ENCODE measurements at regions of chr17 and their contacts with region 1.

Region 1: GRCh38 chr17:2029911-2030778 is at the start of gene DPH1:
- DNase-seq: peak; percentile 95
- H3K4me3 ChIP-seq: peak within 1 kb of the TSS; percentile 91 to 99 (median 96)
- H3K27ac ChIP-seq: peak within 1 kb of the TSS; percentile 74 to 85 (median 82)
- H3K4me1 ChIP-seq: peaks cover 25 to 53% (median 46%) of the 10 kb centered on the region in 4 donors
- H3K27me3 ChIP-seq: peaks cover under 1 to 42% (median 4%) of the 10 kb centered on the region in 4 donors
- CTCF ChIP-seq: peak in 1 of 3 experiments; percentile 36
- EP300 ChIP-seq: no peak
- POLR2A ChIP-seq: no peak
- total RNA-seq, gene DPH1: 27.4 to 41.8 (median 38.3) TPM

Region 2: GRCh38 chr17:1379930-1380313 is 650.2 kb before region 1 on chr17:
- intact Hi-C with region 1: loop called (anchors 10 kb)
- DNase-seq: no peak
- H3K4me3 ChIP-seq: peak overlapping the region in 1 of 4 donors; percentile 5
- H3K27ac ChIP-seq: peak overlapping the region in 3 of 4 donors; percentile 47 to 78 (median 57)
- H3K4me1 ChIP-seq: peaks cover 90 to 100% (median 100%) of the 10 kb centered on the region in 4 donors
- H3K27me3 ChIP-seq: no peaks in the 10 kb centered on the region
- CTCF ChIP-seq: no peak
- EP300 ChIP-seq: no peak
- POLR2A ChIP-seq: no peak

Region 3: DNA sequence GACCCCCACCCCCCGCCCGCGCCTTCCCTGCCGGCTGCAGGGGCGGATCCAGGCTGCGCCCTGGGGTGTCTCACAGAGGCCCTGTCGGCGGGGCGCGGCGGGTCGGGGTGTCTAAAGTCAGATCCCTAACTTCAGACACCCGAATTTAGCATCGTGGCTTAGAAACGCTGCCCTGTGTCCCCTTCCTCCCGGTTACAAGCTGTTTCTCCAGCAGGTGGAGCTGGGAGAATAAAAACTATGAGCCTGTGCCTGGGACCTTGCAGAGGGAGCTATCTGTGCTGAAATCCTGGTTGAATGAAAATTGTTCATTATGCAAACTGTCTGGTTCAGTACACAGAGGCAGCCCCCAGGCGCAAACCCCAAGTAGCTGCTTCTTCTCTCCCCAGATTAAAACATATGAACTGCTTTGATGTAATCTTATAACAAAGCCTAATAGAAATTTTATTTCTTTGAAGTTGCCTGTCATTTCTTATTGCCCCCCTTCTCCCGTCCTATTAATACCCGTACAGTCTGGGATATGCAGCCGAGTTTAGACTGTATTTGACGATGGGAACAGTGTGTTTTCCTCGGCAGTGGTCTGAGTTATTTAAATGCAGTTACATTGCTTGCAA is 121.3 kb before region 1 on chr17:
- intact Hi-C with region 1: loop called (anchors 1 kb)
- DNase-seq: no peak
- H3K4me3 ChIP-seq: peak overlapping the region; percentile 21 to 40 (median 31)
- H3K27ac ChIP-seq: no peak overlapping the region
- H3K4me1 ChIP-seq: peaks cover 4 to 16% (median 13%) of the 10 kb centered on the region in 4 donors
- H3K27me3 ChIP-seq: peaks cover 0 to 92% (median 23%) of the 10 kb centered on the region in 4 donors
- CTCF ChIP-seq: peak; percentile 69
- EP300 ChIP-seq: no peak
- POLR2A ChIP-seq: no peak

Measured in esophagus muscularis mucosa (tissue), 4 donors.